Right lobe of liver (tissue), 6 donors: ENCODE measurements at regions of chr12 and their contacts with region 1.

Region 1: GRCh38 chr12:56359851-56360767 is at the start of gene STAT2:
- DNase-seq: peak; percentile 99 to 100 (median 100)
- ATAC-seq: peak; percentile 85 to 94 (median 87)
- H3K4me3 ChIP-seq: peak within 1 kb of the TSS; percentile 57 to 77 (median 70)
- H3K27ac ChIP-seq: peak within 1 kb of the TSS; percentile 94 to 97 (median 95)
- H3K4me1 ChIP-seq: peaks cover 0 to 45% (median 15%) of the 10 kb centered on the region in 4 donors
- H3K27me3 ChIP-seq: no peaks in the 10 kb centered on the region
- CTCF ChIP-seq: peak in 1 of 4 donors; percentile 13
- POLR2A ChIP-seq: peak; percentile 90
- total RNA-seq, gene STAT2: 82.8 to 182 (median 108) TPM

Region 2: DNA sequence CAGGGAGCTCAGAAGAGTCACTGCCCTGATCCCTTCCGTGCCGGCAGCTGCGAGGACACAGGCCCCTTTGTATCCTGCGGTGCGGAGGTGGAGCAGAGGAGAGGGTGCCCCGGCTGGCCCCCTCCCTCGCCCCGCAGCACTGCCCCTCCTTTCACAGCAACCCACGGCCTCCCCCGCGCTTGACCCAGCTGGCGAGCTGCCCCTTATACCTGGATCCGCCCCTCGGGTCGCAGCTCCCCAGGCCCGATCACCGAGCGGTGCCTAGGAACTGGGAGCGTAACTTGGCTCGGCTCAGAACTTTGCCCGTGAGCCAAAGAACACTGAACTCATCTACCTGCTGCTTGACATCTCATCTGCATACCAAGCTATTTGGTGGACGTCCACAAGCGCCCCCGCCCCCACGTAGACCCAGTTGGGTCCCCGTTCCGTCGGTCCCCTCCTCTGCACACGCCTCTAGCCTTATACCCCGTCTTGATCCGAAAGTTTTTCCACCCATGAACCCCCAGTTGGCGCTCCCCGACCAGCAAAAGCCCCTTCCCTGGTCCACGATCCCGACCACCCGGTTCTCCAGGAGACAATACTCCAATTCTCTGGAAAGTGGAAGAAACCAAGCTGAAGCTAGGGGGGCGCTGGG is 530.0 kb before region 1 on chr12:
- intact Hi-C with region 1: no loop called
- DNase-seq: peak; percentile 58 to 80 (median 79)
- ATAC-seq: peak; percentile 26 to 57 (median 45)
- H3K4me3 ChIP-seq: peak overlapping the region; percentile 79 to 95 (median 89)
- H3K27ac ChIP-seq: peak overlapping the region; percentile 56 to 89 (median 88)
- H3K4me1 ChIP-seq: peaks cover 0 to 23% (median 2%) of the 10 kb centered on the region in 4 donors
- H3K27me3 ChIP-seq: no peaks in the 10 kb centered on the region
- CTCF ChIP-seq: no peak
- POLR2A ChIP-seq: peak; percentile 18

Region 3: GRCh38 chr12:55940065-55940732 is 419.9 kb before region 1 on chr12:
- intact Hi-C with region 1: no loop called
- DNase-seq: peak; percentile 78 to 84 (median 80)
- ATAC-seq: peak; percentile 96 to 98 (median 97)
- H3K4me3 ChIP-seq: no peak overlapping the region
- H3K27ac ChIP-seq: no peak overlapping the region
- H3K4me1 ChIP-seq: no peaks in the 10 kb centered on the region
- H3K27me3 ChIP-seq: no peaks in the 10 kb centered on the region
- CTCF ChIP-seq: peak; percentile 83 to 96 (median 94)
- POLR2A ChIP-seq: no peak

Region 4: DNA sequence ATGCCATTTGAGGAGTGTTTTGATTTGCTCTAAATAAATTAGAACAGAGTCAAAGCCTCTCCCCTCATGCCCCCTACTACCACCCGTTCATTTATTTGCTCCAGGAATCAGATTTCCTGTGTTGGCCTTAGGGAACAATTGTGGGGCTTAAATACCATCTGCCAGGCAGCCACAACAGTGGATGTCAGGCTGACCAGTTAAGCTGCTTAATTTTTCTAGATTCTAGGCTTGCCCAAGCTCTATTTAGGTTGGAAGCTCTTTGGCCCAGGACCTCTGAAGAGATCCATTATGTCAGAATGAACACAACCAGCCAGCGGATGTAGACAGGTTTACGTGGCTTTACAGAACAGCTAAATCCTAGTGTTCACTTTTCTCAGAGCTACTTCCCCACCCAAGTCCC is 90.1 kb after region 1 on chr12:
- intact Hi-C with region 1: loop called (anchors 10 kb)
- DNase-seq: no peak
- ATAC-seq: no peak
- H3K4me3 ChIP-seq: no peak overlapping the region
- H3K27ac ChIP-seq: no peak overlapping the region
- H3K4me1 ChIP-seq: no peaks in the 10 kb centered on the region
- H3K27me3 ChIP-seq: no peaks in the 10 kb centered on the region
- CTCF ChIP-seq: no peak
- POLR2A ChIP-seq: no peak